ENCODE measurements at regions of chr18 and their contacts with region 1.

Region 1: GRCh38 chr18:44927127-44927849 is 246.6 kb downstream of the SETBP1 start:
- DNase-seq: no peak
- H3K4me3 ChIP-seq: no peak overlapping the region
- H3K27ac ChIP-seq: no peak overlapping the region
- H3K4me1 ChIP-seq: peaks cover 0 to 7% of the 10 kb centered on the region in 2 donors
- H3K27me3 ChIP-seq: no peaks in the 10 kb centered on the region
- CTCF ChIP-seq: no peak

Region 2: DNA sequence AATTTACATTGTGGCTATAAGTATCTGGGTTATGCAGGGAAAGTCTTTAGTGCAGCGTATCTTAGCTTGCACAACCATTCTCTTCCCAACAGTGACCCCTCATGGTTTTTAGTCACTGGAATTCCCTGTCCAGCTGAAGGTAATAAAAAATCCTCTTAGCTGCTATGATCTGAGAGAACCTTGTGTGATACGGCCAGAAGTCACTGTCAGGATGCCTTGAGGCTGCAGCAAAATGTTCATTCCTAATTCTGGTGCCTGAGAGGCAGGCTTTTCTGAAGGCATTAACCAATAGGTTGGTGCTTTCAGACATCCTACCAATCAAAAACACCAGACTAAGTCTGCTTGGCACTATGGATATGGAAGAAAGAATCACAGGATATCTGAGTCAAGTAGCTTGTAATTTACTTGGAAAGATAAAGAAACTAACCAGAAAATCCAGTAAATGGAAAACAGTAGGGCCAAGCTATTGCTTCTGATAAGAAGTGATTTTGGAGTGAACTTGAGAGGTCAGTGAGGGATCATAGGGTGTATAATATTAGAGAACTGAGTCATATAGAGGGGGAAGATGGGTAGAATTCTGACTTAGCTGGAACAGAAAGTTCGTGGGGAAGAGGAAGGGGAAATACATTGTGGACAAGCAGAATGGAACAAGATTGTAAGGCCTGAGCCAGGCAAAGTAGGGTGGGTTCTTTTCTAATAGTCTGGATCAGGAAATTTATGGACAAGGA is 599.0 kb after region 1 on chr18:
- intact Hi-C with region 1: loop called (anchors 10 kb)
- DNase-seq: no peak
- H3K4me3 ChIP-seq: no peak overlapping the region
- H3K27ac ChIP-seq: peak overlapping the region; percentile 16 to 53
- H3K4me1 ChIP-seq: peaks cover 10 to 28% of the 10 kb centered on the region in 2 donors
- H3K27me3 ChIP-seq: no peaks in the 10 kb centered on the region
- CTCF ChIP-seq: peak in 1 of 3 experiments; percentile 36

Measured in ascending aorta (tissue), 2 donors.